HEK293 (cell line): ENCODE measurements at regions of chr5 and their contacts with region 1.

Region 1: DNA sequence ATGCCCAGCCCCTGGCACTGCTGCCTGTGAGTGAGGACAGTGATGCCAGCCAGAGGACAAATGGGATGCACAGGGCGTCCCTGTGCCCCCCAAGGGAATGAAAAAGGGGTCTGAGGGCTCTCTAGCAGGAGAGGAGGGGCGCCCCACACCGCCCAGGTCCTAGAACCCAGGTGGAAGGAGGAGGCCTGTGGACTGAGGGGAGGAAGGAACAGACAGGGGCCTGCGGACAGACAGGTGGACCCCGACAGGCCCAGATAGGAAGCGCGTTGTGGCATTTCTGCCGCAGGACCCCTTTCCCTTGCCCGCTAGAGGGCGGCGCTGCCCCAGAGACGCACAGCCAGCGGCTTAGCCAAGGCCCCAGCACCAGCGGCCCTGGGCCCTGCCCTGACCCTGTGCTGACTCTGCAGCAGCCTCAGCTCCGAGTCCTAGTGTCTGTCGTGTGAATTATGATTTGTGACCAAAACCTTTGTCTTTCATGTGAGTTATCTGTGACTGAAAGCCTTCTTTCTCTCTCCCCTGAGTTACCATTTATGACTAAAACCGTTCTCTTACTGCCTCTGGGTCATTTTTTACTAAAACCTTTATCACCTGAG is 30.7 kb downstream of the TRIP13 start:
- H3K4me3 ChIP-seq: no peak overlapping the region
- H3K27ac ChIP-seq: no peak overlapping the region
- H3K4me1 ChIP-seq: 0 out of 2 replicates have a peak, but pooled peaks cover 2% of the 10 kb centered on the region
- CTCF ChIP-seq: peak; percentile 95

Region 2: GRCh38 chr5:947626-948471 is 24.5 kb after region 1 on chr5:
- CTCF ChIA-PET with region 1: interaction called, 14 read pairs
- POLR2A ChIA-PET with region 1: no interaction called
- H3K4me3 ChIP-seq: no peak overlapping the region
- H3K27ac ChIP-seq: no peak overlapping the region
- H3K4me1 ChIP-seq: peaks cover 9% of the 10 kb centered on the region; the same call in 1 of the 2 replicates
- CTCF ChIP-seq: no peak

Region 3: GRCh38 chr5:1004461-1005248 is 81.3 kb after region 1 on chr5:
- CTCF ChIA-PET with region 1: interaction called, 90 read pairs
- POLR2A ChIA-PET with region 1: interaction called, 7 read pairs
- H3K4me3 ChIP-seq: peak overlapping the region; percentile 38
- H3K27ac ChIP-seq: peak overlapping the region; percentile 63; the same call in 1 of the 2 replicates
- H3K4me1 ChIP-seq: peaks cover 19% of the 10 kb centered on the region
- CTCF ChIP-seq: peak; percentile 90

Region 4: GRCh38 chr5:1021136-1021968 is 98.0 kb after region 1 on chr5:
- CTCF ChIA-PET with region 1: interaction called, 15 read pairs
- POLR2A ChIA-PET with region 1: interaction called, 3 read pairs
- H3K4me3 ChIP-seq: no peak overlapping the region
- H3K27ac ChIP-seq: no peak overlapping the region
- H3K4me1 ChIP-seq: no peaks in the 10 kb centered on the region
- CTCF ChIP-seq: no peak

Region 5: DNA sequence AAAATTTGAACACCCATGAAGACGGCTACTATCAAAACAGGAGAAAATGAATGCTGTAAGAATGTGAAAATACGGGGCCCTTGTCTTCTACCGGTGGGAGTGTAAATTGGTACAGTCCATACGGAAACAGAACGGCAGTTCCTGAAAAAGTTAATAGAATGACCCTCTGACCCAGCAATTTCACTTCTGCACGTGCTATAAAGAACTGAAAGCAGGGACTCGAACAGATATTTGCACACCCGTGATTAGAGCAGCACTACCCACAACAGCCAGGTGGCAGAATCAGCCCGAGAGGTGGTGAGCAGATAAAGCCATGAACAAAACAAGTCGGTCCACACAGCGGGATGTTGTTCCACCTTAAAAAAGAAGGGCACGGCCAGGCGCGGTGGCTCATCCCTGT is 211.1 kb after region 1 on chr5:
- CTCF ChIA-PET with region 1: interaction called, 43 read pairs
- POLR2A ChIA-PET with region 1: interaction called, 3 read pairs
- H3K4me3 ChIP-seq: no peak overlapping the region
- H3K27ac ChIP-seq: no peak overlapping the region
- H3K4me1 ChIP-seq: no peaks in the 10 kb centered on the region
- CTCF ChIP-seq: no peak

Region 6: GRCh38 chr5:1161833-1162229 is 238.5 kb after region 1 on chr5:
- CTCF ChIA-PET with region 1: interaction called, 39 read pairs
- POLR2A ChIA-PET with region 1: no interaction called
- H3K4me3 ChIP-seq: no peak overlapping the region
- H3K27ac ChIP-seq: no peak overlapping the region
- H3K4me1 ChIP-seq: no peaks in the 10 kb centered on the region
- CTCF ChIP-seq: no peak

Region 7: DNA sequence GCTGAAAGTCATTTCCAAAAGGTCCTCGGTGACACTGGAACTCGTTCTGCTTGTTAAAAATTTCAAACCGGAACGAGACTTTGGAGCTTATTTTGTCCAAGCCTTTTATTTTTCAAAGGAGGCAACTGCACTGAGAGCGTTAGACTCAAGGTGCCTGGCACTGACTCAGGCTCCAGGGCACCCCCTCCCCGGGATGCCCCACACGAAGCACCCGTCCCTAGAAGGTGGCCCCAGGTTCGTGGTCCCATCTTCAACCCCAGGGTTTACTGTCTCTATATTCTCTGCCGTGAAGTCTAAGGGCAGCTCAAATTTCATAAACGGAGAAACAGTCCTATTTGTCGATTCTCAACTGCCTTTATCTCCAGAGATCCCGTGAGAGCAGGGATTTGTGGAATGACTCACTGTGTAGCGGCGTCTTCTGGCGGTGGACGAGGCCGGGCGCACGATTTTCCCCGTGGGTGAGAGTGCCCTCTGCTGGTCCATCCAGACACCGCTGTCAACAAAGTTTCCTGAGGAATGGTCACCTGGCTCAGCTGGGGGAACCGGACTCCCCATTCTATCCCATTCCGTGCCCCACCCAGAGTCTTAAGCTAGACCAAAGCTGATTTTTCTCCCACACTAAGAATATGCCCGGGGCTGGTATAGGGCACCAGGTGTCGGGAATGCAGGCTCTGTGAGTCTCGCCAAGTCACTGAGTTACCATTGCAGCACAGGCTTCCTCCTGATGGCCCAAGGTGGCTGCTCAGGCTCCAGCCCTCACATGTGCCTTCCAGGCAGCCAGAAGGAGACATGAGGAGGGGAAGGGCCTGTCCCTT is 251.0 kb after region 1 on chr5:
- CTCF ChIA-PET with region 1: interaction called, 39 read pairs
- POLR2A ChIA-PET with region 1: no interaction called
- H3K4me3 ChIP-seq: no peak overlapping the region
- H3K27ac ChIP-seq: no peak overlapping the region
- H3K4me1 ChIP-seq: no peaks in the 10 kb centered on the region; the same call in 1 of the 2 replicates
- CTCF ChIP-seq: peak; percentile 82